Mammary epithelial cell (primary cell): ENCODE measurements at regions of chr12 and their contacts with region 1.

Region 1: DNA sequence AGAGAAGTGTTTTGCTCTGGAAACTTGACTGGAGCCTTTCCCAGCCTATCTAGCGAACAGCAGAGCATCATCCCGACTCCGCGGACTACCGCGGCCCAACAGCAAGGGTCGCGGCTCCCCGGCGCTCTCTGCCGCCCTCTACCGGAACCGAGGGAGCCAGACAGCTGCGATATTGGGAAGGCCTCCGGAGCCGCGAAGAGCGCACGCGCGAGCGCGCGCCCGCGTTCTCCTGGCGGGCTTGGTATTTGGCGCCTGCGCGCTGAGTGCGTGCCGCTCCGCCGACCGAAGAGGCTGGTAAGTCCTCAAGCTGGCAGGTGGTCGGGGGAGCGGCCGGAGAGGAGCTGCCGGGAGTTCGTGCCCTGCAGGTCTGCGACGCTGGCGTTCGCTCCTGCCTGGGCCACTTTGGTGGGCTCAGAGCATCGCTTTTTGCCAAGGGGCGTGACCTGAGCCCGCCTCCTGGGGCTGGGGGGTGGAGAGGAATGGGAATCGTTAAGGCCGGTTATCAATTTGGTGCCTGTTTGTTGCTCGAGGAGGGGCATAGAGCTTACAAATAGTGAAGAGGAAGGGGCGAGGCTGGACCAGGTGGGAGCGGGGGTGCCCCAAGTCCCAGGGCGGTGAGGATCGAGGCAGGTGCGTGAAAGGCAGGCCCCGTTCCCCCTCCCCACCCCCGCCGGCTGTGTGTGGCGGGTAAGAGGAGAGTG is at the start of gene TMEM106C:
- DNase-seq: peak; percentile 82
- H3K4me3 ChIP-seq: peak within 1 kb of the TSS; percentile 60 to 71 (median 70)
- H3K27ac ChIP-seq: no peak within 1 kb of the TSS
- H3K4me1 ChIP-seq: peaks cover 15% of the 10 kb centered on the region
- H3K27me3 ChIP-seq: no peaks in the 10 kb centered on the region
- CTCF ChIP-seq: peak; percentile 84 to 100
- total RNA-seq, gene TMEM106C: 82.5 to 90.2 TPM

Region 2: DNA sequence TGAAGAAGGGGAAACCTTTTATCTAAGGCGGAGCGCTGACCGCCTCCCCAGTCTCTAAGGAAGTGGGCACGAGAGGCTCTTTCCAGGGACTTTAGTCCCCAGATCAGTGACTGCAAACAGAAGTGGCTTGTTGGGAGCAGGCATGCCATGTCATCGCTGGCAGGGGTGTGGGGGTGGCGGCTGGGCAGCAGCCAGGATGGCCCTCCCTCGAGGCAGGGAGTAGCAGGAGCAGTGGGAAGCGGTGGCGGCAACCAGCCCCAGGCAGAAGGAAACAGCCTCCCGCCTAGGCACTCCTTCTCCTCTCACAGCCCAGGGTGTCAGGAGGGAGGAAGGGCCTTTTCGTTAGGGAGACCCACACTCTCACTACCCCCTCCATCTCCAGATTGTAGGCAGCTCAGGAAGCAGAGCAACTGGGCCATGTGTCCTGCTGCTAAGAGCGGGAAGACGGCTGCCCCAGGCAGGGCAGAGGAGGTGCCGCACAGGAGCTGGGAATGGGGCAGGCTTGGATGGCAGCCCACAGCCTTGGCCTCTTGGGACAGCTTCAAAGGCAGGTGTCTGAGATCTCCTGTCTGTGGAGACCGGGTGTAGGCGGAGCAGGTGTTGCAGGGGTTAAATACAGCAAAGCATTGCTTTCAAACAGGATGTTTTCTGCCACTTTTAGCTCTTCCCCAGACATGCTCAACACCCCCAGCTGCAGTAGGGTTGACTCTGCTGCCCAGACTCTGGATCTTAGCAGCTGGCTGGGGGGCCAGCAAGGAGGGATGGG is 80.5 kb before region 1 on chr12:
- CTCF ChIA-PET with region 1: no interaction called
- dilution Hi-C with region 1: loop called (anchors 5 kb)
- in situ Hi-C with region 1: no loop called
- intact Hi-C with region 1: no loop called
- DNase-seq: peak; percentile 43
- H3K4me3 ChIP-seq: no peak overlapping the region
- H3K27ac ChIP-seq: peak overlapping the region; percentile 43
- H3K4me1 ChIP-seq: peaks cover 54% of the 10 kb centered on the region
- H3K27me3 ChIP-seq: no peaks in the 10 kb centered on the region
- CTCF ChIP-seq: no peak

Region 3: GRCh38 chr12:47991106-47992061 is 27.9 kb after region 1 on chr12:
- CTCF ChIA-PET with region 1: no interaction called
- dilution Hi-C with region 1: no loop called
- in situ Hi-C with region 1: no loop called
- intact Hi-C with region 1: no loop called
- DNase-seq: no peak
- H3K4me3 ChIP-seq: no peak overlapping the region
- H3K27ac ChIP-seq: no peak overlapping the region
- H3K4me1 ChIP-seq: no peaks in the 10 kb centered on the region
- H3K27me3 ChIP-seq: peaks cover 2% of the 10 kb centered on the region
- CTCF ChIP-seq: no peak

Region 4: DNA sequence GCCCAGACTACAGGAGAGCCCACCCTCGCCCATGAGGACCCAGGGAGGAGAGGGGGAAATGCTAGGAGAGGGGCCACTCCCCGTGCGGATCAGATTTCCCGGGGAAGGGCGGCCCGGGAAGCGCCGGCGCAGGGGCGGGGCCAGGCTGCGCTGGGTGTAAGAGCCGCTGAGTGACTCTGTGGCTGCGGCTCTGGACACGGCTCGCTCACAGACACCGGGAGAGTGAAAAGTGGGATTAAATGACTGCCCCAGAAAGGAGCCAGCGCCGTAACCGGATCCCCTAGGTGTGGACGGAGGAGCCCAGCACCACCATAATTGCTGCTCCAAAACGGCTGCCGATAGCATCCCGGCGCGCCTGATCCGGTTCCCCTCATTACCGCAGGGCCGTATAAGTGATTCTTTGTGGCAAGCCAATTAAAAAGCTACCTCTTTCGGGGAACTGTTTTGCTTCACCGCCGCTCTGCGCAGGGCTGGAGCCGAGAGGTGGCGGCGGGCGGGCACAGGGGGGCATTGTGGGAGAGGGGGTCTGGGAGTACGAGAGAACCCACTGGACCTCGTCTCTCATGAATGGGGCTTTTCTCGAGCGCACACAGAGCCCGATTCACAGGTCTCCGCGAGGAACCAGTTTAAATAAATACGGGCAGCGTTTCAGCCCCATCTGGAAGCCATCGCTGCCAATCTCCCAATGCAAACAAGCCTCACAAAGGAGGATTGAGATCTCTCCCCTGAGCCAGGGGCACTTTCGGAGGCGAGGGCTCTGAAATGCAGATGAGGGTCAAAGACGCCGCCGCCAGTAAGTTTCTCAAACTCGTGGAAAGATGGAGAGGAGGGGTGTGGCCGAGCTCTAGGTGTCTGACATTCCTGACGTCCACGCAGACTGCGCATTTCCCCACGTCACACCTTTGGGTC is 38.3 kb after region 1 on chr12:
- CTCF ChIA-PET with region 1: no interaction called
- dilution Hi-C with region 1: no loop called
- in situ Hi-C with region 1: no loop called
- intact Hi-C with region 1: loop called (anchors 1 kb)
- DNase-seq: peak; percentile 64
- H3K4me3 ChIP-seq: peak overlapping the region; percentile 43 to 74 (median 54)
- H3K27ac ChIP-seq: peak overlapping the region; percentile 78
- H3K4me1 ChIP-seq: peaks cover 25% of the 10 kb centered on the region
- H3K27me3 ChIP-seq: peaks cover 12% of the 10 kb centered on the region
- CTCF ChIP-seq: no peak

Region 5: DNA sequence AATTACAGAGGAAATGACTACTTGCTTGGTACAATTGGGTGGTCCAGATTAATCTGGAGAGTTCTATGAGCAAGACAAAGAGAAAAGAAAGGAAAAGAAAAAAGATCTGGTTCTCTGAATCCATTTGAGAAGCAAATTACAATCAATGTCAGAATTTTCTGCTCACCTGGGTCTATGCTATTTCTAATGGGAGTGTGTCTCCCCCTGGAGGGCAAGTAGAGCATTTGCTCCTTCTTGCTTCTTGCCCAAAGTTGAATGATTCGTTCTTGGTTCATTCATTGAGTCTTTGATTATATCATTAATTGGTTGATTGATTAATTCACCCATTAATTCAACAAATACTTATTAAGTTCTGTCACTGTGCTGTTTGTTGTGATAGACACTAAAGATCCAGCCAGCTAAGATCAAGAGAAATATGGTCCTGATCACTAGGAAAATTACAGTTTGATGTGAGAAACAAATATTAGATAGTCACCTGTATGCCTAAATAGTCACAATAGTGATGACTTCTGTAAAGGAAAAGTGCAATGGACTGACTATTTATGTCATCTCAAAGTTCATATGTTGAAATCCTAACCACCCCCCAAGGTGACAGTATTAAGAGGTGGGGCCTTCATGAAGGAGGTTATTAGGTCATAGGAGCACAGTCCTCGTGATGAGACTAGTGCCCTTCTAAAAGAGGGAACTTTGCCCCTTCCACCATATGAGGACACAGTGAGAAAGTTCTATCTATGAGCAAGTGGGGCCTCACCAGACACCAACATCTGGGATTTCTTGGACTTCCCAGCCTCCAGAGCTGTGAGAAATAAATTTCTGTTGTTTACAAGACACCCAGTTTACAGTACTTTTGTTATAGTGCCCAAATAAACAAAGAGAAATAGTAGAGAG is 201.8 kb after region 1 on chr12:
- CTCF ChIA-PET with region 1: no interaction called
- dilution Hi-C with region 1: loop called (anchors 25 kb)
- in situ Hi-C with region 1: no loop called
- intact Hi-C with region 1: loop called (anchors 5 kb)
- DNase-seq: peak; percentile 27
- H3K4me3 ChIP-seq: no peak overlapping the region
- H3K27ac ChIP-seq: no peak overlapping the region
- H3K4me1 ChIP-seq: no peaks in the 10 kb centered on the region
- H3K27me3 ChIP-seq: no peaks in the 10 kb centered on the region
- CTCF ChIP-seq: peak; percentile 95 to 98